ENCODE measurements at regions of chr15 and their contacts with region 1.

Region 1: DNA sequence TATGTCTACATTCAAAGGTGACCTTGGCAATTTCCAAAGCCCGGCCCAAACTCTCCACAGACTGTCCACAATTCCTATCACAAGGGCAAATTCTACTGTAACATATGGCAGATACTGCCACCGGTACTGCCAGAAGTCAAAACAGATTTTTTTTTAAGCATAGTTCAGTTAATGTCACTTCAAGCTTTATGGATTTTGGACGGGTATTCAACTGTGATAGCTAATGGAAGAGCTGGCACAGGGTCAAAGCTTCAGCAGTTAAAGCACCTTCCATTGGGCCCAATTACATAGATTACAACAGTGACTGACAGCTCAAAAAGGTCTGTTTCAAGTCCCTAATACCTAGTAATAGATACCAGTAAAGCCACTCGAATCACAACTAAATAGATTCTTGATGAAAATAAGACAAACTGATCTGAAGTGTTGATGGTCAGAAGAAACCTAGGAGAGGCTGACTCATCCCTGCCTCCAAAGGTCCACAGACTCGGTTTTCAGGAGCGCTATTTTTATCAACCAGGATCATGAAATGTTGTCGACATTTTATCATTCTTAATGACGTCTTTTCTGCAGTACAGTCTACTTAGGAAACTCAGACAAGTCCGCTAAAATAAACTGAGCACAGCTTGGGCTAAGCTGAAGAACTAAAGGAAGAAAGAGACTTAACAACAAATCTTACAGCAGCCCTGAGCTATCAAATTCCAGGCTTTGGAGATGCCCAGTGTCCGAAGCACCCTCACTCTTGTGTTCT is 38.7 kb downstream of the ANXA2 start:
- DNase-seq: no peak
- H3K4me3 ChIP-seq: no peak overlapping the region
- H3K27ac ChIP-seq: no peak overlapping the region
- H3K4me1 ChIP-seq: peaks cover 0 to 6% (median 3%) of the 10 kb centered on the region in 3 donors
- H3K27me3 ChIP-seq: no peaks in the 10 kb centered on the region
- CTCF ChIP-seq: no peak

Region 2: GRCh38 chr15:60438646-60439045 is 79.5 kb after region 1 on chr15:
- intact Hi-C with region 1: loop called (anchors 10 kb)
- DNase-seq: no peak
- H3K4me3 ChIP-seq: no peak overlapping the region
- H3K27ac ChIP-seq: no peak overlapping the region
- H3K4me1 ChIP-seq: no peaks in the 10 kb centered on the region
- H3K27me3 ChIP-seq: no peaks in the 10 kb centered on the region
- CTCF ChIP-seq: no peak

Measured in kidney (tissue), 22 donors.